HepG2 (cell line): ENCODE measurements at regions of chr16 and their contacts with region 1.

Region 1: DNA sequence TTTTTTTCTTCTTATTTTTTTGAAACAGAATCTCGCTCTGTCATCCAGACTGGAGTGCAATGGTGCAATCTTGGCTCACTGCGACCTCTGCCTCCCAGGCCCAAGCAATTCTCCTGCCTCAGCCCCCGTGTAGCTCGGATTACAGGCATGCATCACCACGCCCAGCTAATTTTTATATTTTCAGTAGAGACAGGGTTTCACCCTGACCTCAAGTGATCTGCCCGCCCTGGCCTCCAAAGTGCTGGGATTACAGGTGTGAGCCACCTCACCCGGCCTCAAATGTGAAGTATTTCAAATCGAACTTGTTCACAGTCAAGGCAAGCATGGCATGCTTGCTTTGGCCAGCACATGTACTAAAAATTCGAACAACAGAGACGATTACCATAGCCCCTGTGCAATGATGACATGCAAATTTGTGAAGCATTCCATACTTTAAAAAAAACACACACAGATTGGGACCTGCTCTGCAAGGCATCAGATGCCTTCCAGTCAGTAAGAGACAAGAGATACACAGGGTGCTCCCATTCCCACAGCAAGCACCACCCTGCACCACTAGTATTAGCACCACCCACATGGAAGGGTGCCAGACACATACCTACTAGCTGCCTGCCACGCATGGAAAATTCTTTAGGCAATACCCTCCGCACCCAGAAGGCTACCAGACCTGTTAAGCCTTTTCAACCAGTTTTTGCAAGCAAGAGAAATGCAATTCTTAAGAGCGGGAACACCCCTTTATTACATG is 47.2 kb downstream of the ANKRD11 start:
- DNase-seq: peak; percentile 89
- ATAC-seq: peak; percentile 77
- H3K4me3 ChIP-seq: peak overlapping the region in 2 of 3 experiments; percentile 1 to 20; a peak in 3 of 6 replicates
- H3K27ac ChIP-seq: peak overlapping the region; percentile 63
- H3K4me1 ChIP-seq: peaks cover 89% of the 10 kb centered on the region
- H3K27me3 ChIP-seq: no peaks in the 10 kb centered on the region
- CTCF ChIP-seq: peak; percentile 53
- EP300 ChIP-seq: no peak
- POLR2A ChIP-seq: no peak
- RAD21 ChIP-seq: no peak

Region 2: GRCh38 chr16:89417352-89417751 is 25.8 kb before region 1 on chr16:
- CTCF ChIA-PET with region 1: no interaction called
- POLR2A ChIA-PET with region 1: no interaction called
- in situ Hi-C with region 1: no loop called
- intact Hi-C with region 1: loop called (anchors 2 kb)
- DNase-seq: peak; percentile 41
- ATAC-seq: peak; percentile 39
- H3K4me3 ChIP-seq: peak overlapping the region in 1 of 3 experiments; percentile 29; a peak in 2 of 6 replicates
- H3K27ac ChIP-seq: peak overlapping the region; percentile 67
- H3K4me1 ChIP-seq: peaks cover 86% of the 10 kb centered on the region
- H3K27me3 ChIP-seq: no peaks in the 10 kb centered on the region
- CTCF ChIP-seq: no peak
- EP300 ChIP-seq: no peak
- POLR2A ChIP-seq: 0 out of 4 replicates have a peak, but pooled peaks of 1 of the 2 experiments have one; percentile 21
- RAD21 ChIP-seq: no peak

Region 3: GRCh38 chr16:89490387-89491237 is 47.5 kb after region 1 on chr16 and contains the start of gene ANKRD11:
- CTCF ChIA-PET with region 1: no interaction called
- POLR2A ChIA-PET with region 1: interaction called, 5 read pairs
- in situ Hi-C with region 1: no loop called
- intact Hi-C with region 1: loop called (anchors 5 kb)
- DNase-seq: peak; percentile 100
- ATAC-seq: peak; percentile 93
- H3K4me3 ChIP-seq: peak within 1 kb of the TSS; percentile 61 to 93 (median 85)
- H3K27ac ChIP-seq: peak within 1 kb of the TSS; percentile 81
- H3K4me1 ChIP-seq: peaks cover 59% of the 10 kb centered on the region
- H3K27me3 ChIP-seq: no peaks in the 10 kb centered on the region; a peak in 1 of 5 replicates
- CTCF ChIP-seq: no peak; the same call in 1 of the 2 replicates
- EP300 ChIP-seq: no peak
- POLR2A ChIP-seq: peak; percentile 91 to 93
- RAD21 ChIP-seq: peak; percentile 88
- total RNA-seq, gene ANKRD11: 21.4 and 24.4 TPM in 2 replicates